GM12878 (cell line): ENCODE measurements at regions of chr7 and their contacts with region 1.

Region 1: GRCh38 chr7:140209866-140210609 is 33.3 kb upstream of the KDM7A start:
- DNase-seq: peak; percentile 85
- ATAC-seq: peak; percentile 96
- H3K4me3 ChIP-seq: peak overlapping the region; percentile 24; the same call in 1 of the 2 replicates
- H3K27ac ChIP-seq: peak overlapping the region; percentile 78
- H3K4me1 ChIP-seq: peaks cover 58% of the 10 kb centered on the region
- H3K27me3 ChIP-seq: peaks cover 0 to 8% of the 10 kb centered on the region in 2 experiments
- CTCF ChIP-seq: no peak
- EP300 ChIP-seq: peak; percentile 75 to 95; a peak in 3 of 4 replicates
- POLR2A ChIP-seq: no peak; the same call in 1 of the 2 replicates
- RAD21 ChIP-seq: 0 out of 2 replicates have a peak, but pooled peaks have one; percentile 24

Region 2: DNA sequence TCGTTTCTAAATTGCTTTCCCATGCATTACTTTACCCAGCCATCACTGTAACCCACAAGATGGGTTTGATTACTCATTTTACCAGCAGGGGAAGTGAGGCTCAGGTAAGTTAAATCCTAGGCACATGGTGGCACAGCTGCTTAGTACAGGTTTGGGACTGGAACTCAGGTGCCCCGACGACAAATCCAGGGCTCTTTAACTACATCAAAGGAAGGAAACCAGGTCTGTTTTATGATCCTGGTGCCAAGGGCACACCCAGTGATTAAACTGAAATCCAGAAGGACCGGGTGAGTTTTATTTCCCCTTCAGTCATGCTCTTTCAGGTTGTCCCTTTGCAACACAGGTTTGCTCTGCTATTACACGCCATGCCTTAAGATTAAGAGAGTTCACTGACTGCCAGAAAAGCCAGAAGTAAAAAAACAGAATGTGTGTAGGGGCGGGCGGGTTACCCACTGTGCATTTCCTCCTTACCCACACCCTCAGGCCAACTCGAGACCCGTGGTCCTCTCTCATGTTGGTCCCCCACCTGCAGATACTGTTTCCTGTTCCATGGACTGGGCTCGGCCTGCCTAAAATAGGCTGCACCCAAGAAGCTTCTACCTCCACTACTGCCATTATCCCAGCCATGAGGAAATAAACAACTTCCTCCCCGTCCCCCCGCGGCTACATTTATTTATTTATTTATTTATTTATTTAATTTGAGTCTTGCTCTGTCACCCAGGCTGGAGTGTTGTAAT is 21.9 kb after region 1 on chr7:
- CTCF ChIA-PET with region 1: no interaction called
- POLR2A ChIA-PET with region 1: no interaction called
- RAD21 ChIA-PET with region 1: no interaction called
- SMC1A ChIA-PET with region 1: interaction called, 3 read pairs
- in situ Hi-C with region 1: no loop called
- intact Hi-C with region 1: loop called (anchors 1 kb)
- DNase-seq: no peak
- ATAC-seq: no peak
- H3K4me3 ChIP-seq: peak overlapping the region; percentile 62; the same call in 1 of the 2 replicates
- H3K27ac ChIP-seq: no peak overlapping the region
- H3K4me1 ChIP-seq: peaks cover 33% of the 10 kb centered on the region
- H3K27me3 ChIP-seq: peaks cover 5 to 10% of the 10 kb centered on the region in 2 experiments; a peak in 3 of 4 replicates
- CTCF ChIP-seq: no peak
- EP300 ChIP-seq: no peak
- POLR2A ChIP-seq: no peak
- RAD21 ChIP-seq: no peak

Region 3: GRCh38 chr7:140249036-140249806 is 39.2 kb after region 1 on chr7:
- CTCF ChIA-PET with region 1: interaction called, 4 read pairs
- POLR2A ChIA-PET with region 1: no interaction called
- RAD21 ChIA-PET with region 1: no interaction called
- SMC1A ChIA-PET with region 1: no interaction called
- in situ Hi-C with region 1: no loop called
- intact Hi-C with region 1: loop called (anchors 5 kb)
- DNase-seq: no peak
- ATAC-seq: no peak
- H3K4me3 ChIP-seq: no peak overlapping the region
- H3K27ac ChIP-seq: no peak overlapping the region
- H3K4me1 ChIP-seq: no peaks in the 10 kb centered on the region
- H3K27me3 ChIP-seq: peaks cover 2 to 3% of the 10 kb centered on the region in 2 experiments; a peak in 3 of 4 replicates
- CTCF ChIP-seq: no peak
- EP300 ChIP-seq: no peak
- POLR2A ChIP-seq: no peak
- RAD21 ChIP-seq: no peak

Region 4: DNA sequence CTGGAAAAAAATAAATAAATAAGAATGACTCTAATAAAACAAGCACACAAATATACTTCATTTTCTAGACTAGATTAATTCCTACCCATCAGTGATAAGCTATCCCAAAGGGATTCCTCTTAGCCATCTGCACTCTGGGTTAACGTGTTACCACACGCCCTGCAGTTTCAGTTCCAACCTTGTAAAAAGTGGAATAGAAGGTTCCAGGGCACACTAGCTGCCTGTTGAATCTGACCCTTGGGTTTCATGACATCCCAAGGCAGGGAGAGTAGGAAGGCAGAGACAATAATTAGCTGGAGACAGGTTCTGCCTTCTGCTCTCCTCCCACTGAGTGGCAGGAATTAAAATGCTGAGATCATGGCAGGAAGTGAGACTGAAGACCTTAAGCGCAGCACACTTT is 154.8 kb after region 1 on chr7:
- CTCF ChIA-PET with region 1: no interaction called
- POLR2A ChIA-PET with region 1: no interaction called
- RAD21 ChIA-PET with region 1: no interaction called
- SMC1A ChIA-PET with region 1: no interaction called
- in situ Hi-C with region 1: no loop called
- intact Hi-C with region 1: no loop called
- DNase-seq: no peak
- ATAC-seq: no peak
- H3K4me3 ChIP-seq: no peak overlapping the region
- H3K27ac ChIP-seq: no peak overlapping the region
- H3K4me1 ChIP-seq: no peaks in the 10 kb centered on the region; the same call in 1 of the 2 replicates
- H3K27me3 ChIP-seq: no peaks in the 10 kb centered on the region
- CTCF ChIP-seq: no peak
- EP300 ChIP-seq: no peak
- POLR2A ChIP-seq: no peak
- RAD21 ChIP-seq: no peak